ENCODE measurements at regions of chr6 and their contacts with region 1.

Region 1: DNA sequence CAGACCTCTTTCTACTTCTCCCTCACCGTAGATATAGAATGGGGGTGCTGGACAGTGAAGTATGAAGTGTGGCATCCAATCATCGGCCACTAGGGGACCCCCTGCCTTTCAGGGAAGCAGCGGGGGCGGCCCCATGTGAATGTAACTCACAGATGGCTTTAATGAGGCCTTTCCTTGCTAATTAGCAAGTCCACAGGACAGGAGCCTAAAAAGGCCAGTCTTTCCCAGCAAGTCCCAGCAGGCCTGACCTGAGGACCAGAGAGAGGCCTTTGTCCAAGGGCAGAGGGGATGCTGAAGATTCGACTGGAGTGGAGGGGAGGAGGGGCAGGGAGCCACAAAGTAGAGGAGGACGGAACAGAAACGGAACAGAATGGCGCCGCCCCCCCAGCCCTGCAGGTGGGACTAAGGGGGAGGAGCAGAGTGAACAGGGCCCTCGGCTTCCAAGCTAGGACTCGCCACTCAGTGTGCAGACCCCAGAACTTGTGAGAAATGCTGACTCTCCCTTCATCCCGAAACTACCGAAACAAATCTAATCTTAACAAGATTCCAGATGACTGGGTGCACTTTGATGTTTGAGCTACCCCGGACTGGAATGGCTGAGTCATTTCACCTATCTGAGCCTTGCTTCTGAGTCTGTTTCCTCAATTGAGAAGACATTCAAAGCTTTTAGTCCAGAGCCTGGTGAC is 5.8 kb downstream of the C6orf132 start:
- DNase-seq: peak; percentile 64
- H3K4me3 Mint-ChIP-seq: peak overlapping the region; percentile 55
- H3K27ac Mint-ChIP-seq: peak overlapping the region; percentile 79
- H3K4me1 Mint-ChIP-seq: peaks cover 74% of the 10 kb centered on the region
- H3K27me3 Mint-ChIP-seq: no peaks in the 10 kb centered on the region
- CTCF ChIP-seq: peak; percentile 36

Region 2: DNA sequence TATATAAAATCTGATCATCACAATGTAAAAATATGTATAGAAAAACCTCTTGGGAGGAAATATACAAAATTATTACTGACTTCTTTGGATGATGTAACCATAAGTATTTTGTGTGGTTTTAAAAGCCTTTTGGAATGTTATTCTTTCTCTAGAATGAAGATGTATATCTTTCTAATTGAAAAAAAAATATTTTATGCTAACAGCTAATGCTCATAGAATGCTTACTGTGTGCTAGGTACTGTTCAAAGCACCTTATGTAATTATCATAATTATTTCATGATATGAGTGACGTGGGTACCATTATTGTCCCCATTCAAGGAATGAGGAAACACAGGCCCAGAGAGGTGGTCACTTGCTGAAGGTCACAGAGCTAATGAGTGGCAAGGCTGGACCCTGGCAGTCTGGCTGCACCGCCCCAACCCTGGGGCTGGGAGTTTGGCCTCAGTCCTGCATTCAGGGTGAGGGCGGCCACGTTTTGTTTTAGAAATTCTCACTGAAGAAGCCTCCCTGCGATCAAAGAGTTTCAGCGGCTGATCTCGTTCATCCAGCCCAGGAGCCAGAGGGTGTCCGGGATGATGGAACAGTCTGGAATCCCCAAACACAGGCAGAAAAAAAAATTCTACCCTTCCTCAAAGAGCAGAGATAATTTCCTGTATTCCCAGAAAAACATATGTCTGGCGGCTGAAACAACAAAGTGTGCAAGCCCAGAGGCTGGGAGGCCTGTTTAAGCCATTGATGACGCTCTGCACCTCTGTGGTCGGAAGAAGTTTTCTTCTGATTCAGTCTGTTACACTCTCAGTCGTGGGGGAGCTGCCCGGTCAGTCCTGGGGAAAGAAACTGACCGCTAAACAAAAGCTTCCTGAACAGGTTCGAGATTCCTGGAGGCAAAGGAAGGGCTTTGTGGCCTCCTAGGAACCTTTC is 438.5 kb before region 1 on chr6:
- CTCF ChIA-PET with region 1: no interaction called
- intact Hi-C with region 1: no loop called
- DNase-seq: no peak
- H3K4me3 Mint-ChIP-seq: no peak overlapping the region
- H3K27ac Mint-ChIP-seq: no peak overlapping the region
- H3K4me1 Mint-ChIP-seq: peaks cover 9% of the 10 kb centered on the region
- H3K27me3 Mint-ChIP-seq: no peaks in the 10 kb centered on the region
- CTCF ChIP-seq: no peak

Region 3: GRCh38 chr6:42099340-42100028 is 37.2 kb before region 1 on chr6:
- CTCF ChIA-PET with region 1: interaction called, 11 read pairs
- intact Hi-C with region 1: loop called (anchors 1 kb)
- DNase-seq: peak; percentile 74
- H3K4me3 Mint-ChIP-seq: peak overlapping the region; percentile 23
- H3K27ac Mint-ChIP-seq: peak overlapping the region; percentile 78
- H3K4me1 Mint-ChIP-seq: peaks cover 63% of the 10 kb centered on the region
- H3K27me3 Mint-ChIP-seq: no peaks in the 10 kb centered on the region
- CTCF ChIP-seq: no peak